CD4-positive, alpha-beta memory T cell (primary cell): ENCODE measurements at regions of chr5 and their contacts with region 1.

Region 1: GRCh38 chr5:80466669-80467485 is 21.0 kb upstream of the FAM151B start:
- DNase-seq: no peak
- H3K4me3 ChIP-seq: no peak overlapping the region
- H3K4me3 Mint-ChIP-seq: no peak overlapping the region
- H3K27ac ChIP-seq: no peak overlapping the region
- H3K27ac Mint-ChIP-seq: no peak overlapping the region
- H3K4me1 ChIP-seq: no peaks in the 10 kb centered on the region
- H3K4me1 Mint-ChIP-seq: no peaks in the 10 kb centered on the region
- H3K27me3 ChIP-seq: no peaks in the 10 kb centered on the region
- H3K27me3 Mint-ChIP-seq: no peaks in the 10 kb centered on the region

Region 2: DNA sequence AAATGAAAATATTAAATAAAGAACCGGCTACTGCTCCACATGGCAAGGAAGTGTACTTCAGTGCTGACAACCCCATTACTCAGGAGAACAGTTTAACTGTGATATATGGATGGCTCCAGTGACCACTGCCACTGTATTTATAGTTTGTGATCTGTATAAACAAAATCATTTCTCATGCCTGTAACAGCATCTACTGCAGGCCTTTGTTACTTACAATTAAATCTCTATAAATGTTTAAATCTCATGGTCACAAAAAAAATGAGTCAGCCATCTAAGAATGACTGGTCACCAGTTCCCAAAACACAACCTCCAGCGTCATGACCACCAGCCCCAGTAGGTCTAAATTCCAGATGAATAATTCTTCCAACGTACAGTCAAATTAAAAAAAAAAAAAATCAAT is 235.6 kb before region 1 on chr5:
- CTCF ChIA-PET with region 1: no interaction called
- POLR2A ChIA-PET with region 1: no interaction called
- intact Hi-C with region 1: no loop called
- DNase-seq: no peak
- H3K4me3 ChIP-seq: no peak overlapping the region
- H3K4me3 Mint-ChIP-seq: peak overlapping the region in 7 of 8 donors; percentile 44 to 76 (median 51)
- H3K27ac ChIP-seq: no peak overlapping the region
- H3K27ac Mint-ChIP-seq: peak overlapping the region; percentile 37 to 90 (median 65)
- H3K4me1 ChIP-seq: peaks cover 93% of the 10 kb centered on the region
- H3K4me1 Mint-ChIP-seq: peaks cover 47 to 86% (median 70%) of the 10 kb centered on the region in 4 donors
- H3K27me3 ChIP-seq: no peaks in the 10 kb centered on the region
- H3K27me3 Mint-ChIP-seq: no peaks in the 10 kb centered on the region

Region 3: DNA sequence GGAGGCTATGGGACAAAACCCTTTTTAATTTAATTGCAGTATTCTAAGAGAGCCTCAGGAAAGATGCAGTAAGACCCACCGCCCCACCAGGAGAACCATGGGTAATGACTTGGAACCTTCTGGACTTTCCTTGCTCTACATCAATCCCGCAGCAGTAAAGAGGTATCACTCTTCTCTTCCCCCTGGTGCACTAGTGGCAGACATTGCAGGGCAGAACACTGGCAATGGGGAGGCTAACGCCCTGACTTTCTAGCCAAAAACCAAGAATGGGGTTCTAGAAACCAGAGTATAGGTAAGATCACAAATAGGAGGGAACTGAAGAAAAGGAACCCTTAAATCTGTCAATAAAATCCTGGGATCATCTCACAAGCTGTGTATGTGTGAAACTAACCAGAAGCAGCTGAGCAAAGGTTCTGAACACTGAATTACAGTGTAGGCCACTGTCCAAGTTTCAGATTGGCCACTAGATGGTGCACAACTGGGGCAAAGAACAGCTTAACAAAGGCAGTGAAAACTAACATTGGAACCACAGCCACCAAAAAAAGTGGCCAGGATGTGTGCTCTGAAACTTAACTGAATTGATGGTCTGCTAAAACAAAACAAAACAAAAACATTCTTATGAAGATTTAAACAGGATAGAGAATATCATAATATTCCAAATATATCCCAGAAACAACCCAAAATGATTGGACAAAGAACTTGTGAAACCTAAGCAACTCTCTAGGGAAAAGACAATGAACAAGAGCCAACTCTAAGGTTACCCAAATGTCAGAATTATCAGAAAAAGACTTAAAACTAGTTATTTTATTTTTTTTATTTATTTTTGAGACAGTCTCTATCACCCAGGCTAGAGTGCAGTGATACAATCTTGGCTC is 14.4 kb after region 1 on chr5:
- CTCF ChIA-PET with region 1: interaction called, 10 read pairs
- POLR2A ChIA-PET with region 1: no interaction called
- intact Hi-C with region 1: no loop called
- DNase-seq: peak in 4 of 5 donors; percentile 16 to 31 (median 23)
- H3K4me3 ChIP-seq: no peak overlapping the region
- H3K4me3 Mint-ChIP-seq: no peak overlapping the region
- H3K27ac ChIP-seq: no peak overlapping the region
- H3K27ac Mint-ChIP-seq: no peak overlapping the region
- H3K4me1 ChIP-seq: no peaks in the 10 kb centered on the region
- H3K4me1 Mint-ChIP-seq: peaks cover 0 to under 1% (median under 1%) of the 10 kb centered on the region in 4 donors
- H3K27me3 ChIP-seq: no peaks in the 10 kb centered on the region
- H3K27me3 Mint-ChIP-seq: no peaks in the 10 kb centered on the region